ENCODE measurements at regions of chr14 and their contacts with region 1.

Region 1: GRCh38 chr14:51846631-51847488 is 13.6 kb upstream of the GNG2 start:
- DNase-seq: peak; percentile 87
- H3K4me3 Mint-ChIP-seq: peak overlapping the region; percentile 78
- H3K27ac Mint-ChIP-seq: peak overlapping the region; percentile 94
- H3K4me1 Mint-ChIP-seq: peaks cover 56% of the 10 kb centered on the region
- H3K27me3 Mint-ChIP-seq: no peaks in the 10 kb centered on the region

Region 2: DNA sequence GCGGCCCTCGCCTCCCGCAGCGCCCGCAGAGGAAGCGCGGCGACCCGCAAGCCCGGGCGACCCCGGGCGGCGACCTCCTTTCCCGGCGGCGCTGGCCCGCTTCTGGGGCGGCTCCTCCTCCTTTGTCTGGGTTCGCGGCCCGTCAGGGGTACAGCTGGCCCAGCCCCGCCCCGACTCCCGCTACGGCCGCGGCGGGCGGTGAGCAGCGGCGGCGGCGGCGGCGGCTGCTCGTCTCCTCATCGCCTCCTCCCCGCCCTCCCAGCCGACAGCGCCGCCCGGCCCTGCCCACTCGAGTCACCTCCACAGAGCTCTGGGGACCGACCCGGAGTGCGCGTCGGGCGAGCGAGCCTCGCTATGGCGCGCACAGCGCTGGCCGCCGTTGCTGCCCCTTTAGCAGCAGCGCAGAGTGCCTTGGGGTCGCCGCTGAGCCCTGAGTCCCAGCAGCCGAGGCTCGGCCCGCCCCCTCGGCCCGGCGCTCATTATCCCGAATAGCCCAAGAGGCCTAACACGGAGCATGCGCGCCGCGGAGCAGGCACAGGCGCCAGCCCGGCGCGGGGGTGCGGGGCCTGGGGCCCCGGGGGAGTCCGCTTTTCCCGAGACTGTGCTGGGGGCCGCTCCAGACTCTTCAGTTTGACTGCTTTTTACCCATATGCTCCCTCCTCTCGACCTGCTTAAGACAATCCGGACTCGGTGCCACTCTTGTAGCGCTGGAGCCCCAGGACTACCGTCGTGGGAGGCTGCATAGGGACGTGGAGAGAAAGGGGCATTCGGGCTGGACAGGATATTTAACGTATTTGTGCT is 1615.2 kb before region 1 on chr14 and contains the start of gene SOS2:
- intact Hi-C with region 1: loop called (anchors 5 kb)
- DNase-seq: peak; percentile 80
- H3K4me3 Mint-ChIP-seq: peak within 1 kb of the TSS; percentile 92
- H3K27ac Mint-ChIP-seq: peak within 1 kb of the TSS; percentile 88
- H3K4me1 Mint-ChIP-seq: peaks cover 36% of the 10 kb centered on the region
- H3K27me3 Mint-ChIP-seq: peaks cover 4% of the 10 kb centered on the region
- total RNA-seq, gene SOS2: 17.0 and 20.7 TPM in 2 replicates

Region 3: GRCh38 chr14:51310505-51310944 is 536.3 kb before region 1 on chr14:
- intact Hi-C with region 1: no loop called
- DNase-seq: no peak
- H3K4me3 Mint-ChIP-seq: no peak overlapping the region
- H3K27ac Mint-ChIP-seq: no peak overlapping the region
- H3K4me1 Mint-ChIP-seq: peaks cover 4% of the 10 kb centered on the region
- H3K27me3 Mint-ChIP-seq: peaks cover 13% of the 10 kb centered on the region

Region 4: GRCh38 chr14:51780006-51780692 is 66.7 kb before region 1 on chr14:
- intact Hi-C with region 1: loop called (anchors 5 kb)
- DNase-seq: peak; percentile 58
- H3K4me3 Mint-ChIP-seq: no peak overlapping the region
- H3K27ac Mint-ChIP-seq: no peak overlapping the region
- H3K4me1 Mint-ChIP-seq: peaks cover 12% of the 10 kb centered on the region
- H3K27me3 Mint-ChIP-seq: peaks cover 42% of the 10 kb centered on the region

Region 5: GRCh38 chr14:51860164-51860824 is 13.4 kb after region 1 on chr14 and contains the start of gene GNG2:
- intact Hi-C with region 1: loop called (anchors 1 kb)
- DNase-seq: peak; percentile 78
- H3K4me3 Mint-ChIP-seq: peak within 1 kb of the TSS; percentile 96
- H3K27ac Mint-ChIP-seq: peak within 1 kb of the TSS; percentile 84
- H3K4me1 Mint-ChIP-seq: peaks cover 53% of the 10 kb centered on the region
- H3K27me3 Mint-ChIP-seq: no peaks in the 10 kb centered on the region
- total RNA-seq, gene GNG2: 120 and 128 TPM in 2 replicates

Region 6: GRCh38 chr14:51873221-51873893 is 26.5 kb after region 1 on chr14:
- intact Hi-C with region 1: loop called (anchors 1 kb)
- DNase-seq: no peak
- H3K4me3 Mint-ChIP-seq: peak overlapping the region; percentile 22
- H3K27ac Mint-ChIP-seq: peak overlapping the region; percentile 85
- H3K4me1 Mint-ChIP-seq: peaks cover 54% of the 10 kb centered on the region
- H3K27me3 Mint-ChIP-seq: no peaks in the 10 kb centered on the region

Region 7: DNA sequence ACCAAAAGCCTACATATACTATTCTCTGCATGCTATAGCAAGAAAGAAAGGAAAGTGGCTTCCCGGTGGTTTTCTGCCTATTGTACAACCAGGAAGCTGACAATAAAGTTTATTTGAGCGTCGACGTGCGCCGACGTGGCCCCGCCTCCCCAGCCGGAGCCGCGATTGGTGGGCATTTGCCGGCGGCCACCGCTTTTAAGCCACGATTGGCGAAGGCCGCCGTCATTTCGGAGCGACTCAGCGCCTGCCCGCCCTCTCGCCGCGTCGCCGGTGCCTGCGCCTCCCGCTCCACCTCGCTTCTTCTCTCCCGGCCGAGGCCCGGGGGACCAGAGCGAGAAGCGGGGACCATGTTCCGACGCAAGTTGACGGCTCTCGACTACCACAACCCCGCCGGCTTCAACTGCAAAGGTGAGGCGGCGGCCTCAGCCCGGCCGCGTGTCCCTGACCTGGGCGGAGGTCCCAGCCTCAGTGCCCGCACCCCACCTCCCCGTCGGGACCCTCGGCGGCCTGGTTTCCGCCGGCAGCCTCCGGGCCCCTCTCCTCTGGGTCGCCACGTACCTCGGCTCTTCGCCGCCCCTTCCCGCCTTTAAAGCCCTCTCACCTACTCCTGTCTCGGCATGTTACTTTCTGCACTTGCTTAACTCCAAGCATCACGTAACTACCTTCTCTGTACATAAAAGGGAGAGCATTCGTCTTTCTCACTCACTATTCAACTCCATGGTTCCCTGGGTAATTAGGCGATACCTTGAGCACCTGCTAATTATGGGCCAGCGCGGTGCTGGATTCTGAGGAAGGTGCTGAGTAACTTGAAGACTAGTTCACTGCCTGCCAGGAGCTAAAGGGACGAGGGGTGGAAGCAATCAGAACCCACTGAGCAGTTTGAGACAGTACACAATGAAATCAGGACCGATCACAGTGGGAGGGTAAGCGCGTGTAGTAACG is 142.7 kb after region 1 on chr14 and contains the start of gene RTRAF:
- intact Hi-C with region 1: loop called (anchors 1 kb)
- DNase-seq: peak; percentile 91
- H3K4me3 Mint-ChIP-seq: peak within 1 kb of the TSS; percentile 95
- H3K27ac Mint-ChIP-seq: peak within 1 kb of the TSS; percentile 90
- H3K4me1 Mint-ChIP-seq: peaks cover 31% of the 10 kb centered on the region
- H3K27me3 Mint-ChIP-seq: peaks cover 2% of the 10 kb centered on the region
- total RNA-seq, gene RTRAF: 192 and 212 TPM in 2 replicates

Region 8: DNA sequence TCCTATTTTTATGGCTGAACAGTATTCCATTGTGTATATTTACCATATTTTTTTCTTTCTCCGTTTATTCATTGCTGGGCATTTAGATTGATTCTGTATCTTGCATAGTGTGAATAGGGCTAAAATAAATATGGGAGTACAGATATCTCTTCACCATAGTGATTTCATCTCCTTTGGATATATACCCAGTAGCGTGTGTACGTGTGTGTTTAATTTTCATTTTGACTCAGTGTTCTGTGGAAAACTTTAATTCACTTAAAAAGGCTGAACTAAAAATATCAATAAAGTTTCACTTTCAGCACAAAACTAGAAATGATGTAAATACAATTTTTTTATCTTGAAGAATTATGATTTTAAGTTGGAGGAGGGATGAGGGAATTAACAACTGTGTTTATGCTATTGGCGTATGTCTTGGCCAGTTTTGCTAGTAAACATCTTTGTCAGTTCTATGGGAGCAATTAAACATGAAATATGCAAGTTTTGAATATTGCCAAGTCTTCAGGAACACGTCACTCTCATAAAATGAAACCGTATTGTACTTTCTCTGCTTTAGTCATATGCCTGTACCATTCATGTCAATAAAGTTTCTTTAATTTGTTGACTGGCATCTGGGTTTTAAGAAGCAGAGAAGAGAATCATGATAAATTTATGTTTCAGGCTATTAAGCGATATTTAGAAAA is 567.0 kb after region 1 on chr14:
- intact Hi-C with region 1: loop called (anchors 5 kb)
- DNase-seq: no peak
- H3K4me3 Mint-ChIP-seq: peak overlapping the region; percentile 67
- H3K27ac Mint-ChIP-seq: peak overlapping the region; percentile 97
- H3K4me1 Mint-ChIP-seq: peaks cover 66% of the 10 kb centered on the region
- H3K27me3 Mint-ChIP-seq: no peaks in the 10 kb centered on the region

Measured in activated T-helper 2 cell treated with anti-CD3 and anti-CD28 coated beads, Interferon-gamma antibody, Interleukin-2, Interleukin-4, amounts not matched to agents 10 μg/mL and 5 μg/mL and 100 μg/mL, durations not matched to agents 14 hours and 24 hours and 36 hours (primary cell).